ENCODE measurements at regions of chr7 and their contacts with region 1.

Region 1: DNA sequence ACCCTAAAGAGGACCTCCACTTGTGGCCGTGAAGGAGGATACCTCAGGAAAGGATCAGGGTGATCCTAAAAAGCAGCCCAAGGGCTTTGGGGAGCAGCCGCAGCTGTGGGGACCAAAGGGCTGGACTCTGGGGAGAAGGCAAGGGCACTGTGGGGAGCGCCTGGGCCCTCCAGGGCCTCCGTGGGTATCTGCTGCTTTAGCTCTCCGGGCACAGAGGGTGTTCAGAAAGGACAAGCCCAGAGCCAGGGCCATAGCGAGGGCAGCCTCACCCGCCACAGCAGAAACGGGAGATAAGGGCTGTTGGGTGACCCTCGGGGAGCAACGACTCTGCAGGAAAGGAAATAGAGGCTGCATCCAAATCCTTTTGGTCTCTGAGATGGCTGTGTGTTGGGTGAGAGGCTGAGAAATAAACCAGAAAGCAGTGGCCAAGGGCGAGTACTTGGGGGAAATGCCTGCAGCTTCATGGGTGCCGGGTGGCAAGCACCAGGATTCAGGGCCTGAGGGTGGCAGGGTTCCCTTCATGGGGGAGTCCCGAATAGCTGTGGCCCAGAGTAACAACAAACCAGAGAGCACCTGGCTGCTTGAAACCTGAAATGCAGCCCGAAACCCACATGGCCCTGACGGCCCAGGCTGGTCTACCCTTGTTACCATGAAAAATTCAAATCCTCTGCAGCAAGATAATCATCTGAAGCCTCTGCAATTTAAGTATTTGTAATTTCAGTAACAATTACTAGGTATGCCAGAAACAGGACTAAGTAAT is 95.2 kb downstream of the VIPR2 start:
- DNase-seq: no peak
- ATAC-seq: no peak

Region 2: GRCh38 chr7:159115601-159116501 is 66.4 kb after region 1 on chr7:
- intact Hi-C with region 1: loop called in 1 of 2 experiments (anchors 10 kb)
- DNase-seq: no peak
- ATAC-seq: no peak

Region 3: DNA sequence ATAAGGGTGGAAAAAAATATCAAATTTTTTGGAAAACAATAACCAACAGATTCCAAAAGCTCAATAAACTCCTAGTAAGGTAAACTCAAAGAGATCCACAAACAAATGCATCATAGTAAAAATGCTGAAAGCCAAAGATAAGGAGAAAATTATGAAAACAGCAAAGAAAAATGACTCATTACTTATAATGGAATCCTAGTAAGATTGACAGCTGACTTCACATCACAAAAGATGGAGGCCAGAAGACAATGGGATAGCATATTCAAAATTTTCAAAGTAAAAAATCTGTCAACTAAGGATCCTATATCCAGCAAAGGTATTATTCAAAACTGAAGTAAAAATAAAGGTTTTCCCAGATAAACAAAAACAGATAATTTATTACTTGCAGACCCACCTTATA is 278.6 kb after region 1 on chr7:
- intact Hi-C with region 1: no loop called
- DNase-seq: no peak
- ATAC-seq: no peak

Measured in left colon (tissue), 2 donors.